Heart right ventricle (tissue), 16 donors: ENCODE measurements at regions of chr6 and their contacts with region 1.

Region 1: GRCh38 chr6:72084992-72085569 is 198.7 kb downstream of the RIMS1 start:
- DNase-seq: no peak
- ATAC-seq: no peak
- H3K4me3 ChIP-seq: no peak overlapping the region
- H3K27ac ChIP-seq: no peak overlapping the region
- H3K4me1 ChIP-seq: no peaks in the 10 kb centered on the region
- H3K27me3 ChIP-seq: peaks cover 0 to 7% (median 4%) of the 10 kb centered on the region in 7 donors
- CTCF ChIP-seq: peak in 8 of 9 donors; percentile 30 to 68 (median 56)

Region 2: GRCh38 chr6:71533939-71534379 is 551.1 kb before region 1 on chr6:
- intact Hi-C with region 1: loop called in 9 of 10 experiments (anchors 2 to 5 kb)
- DNase-seq: no peak
- ATAC-seq: no peak
- H3K4me3 ChIP-seq: no peak overlapping the region
- H3K27ac ChIP-seq: no peak overlapping the region
- H3K4me1 ChIP-seq: no peaks in the 10 kb centered on the region
- H3K27me3 ChIP-seq: no peaks in the 10 kb centered on the region
- CTCF ChIP-seq: peak; percentile 30 to 80 (median 69)

Region 3: DNA sequence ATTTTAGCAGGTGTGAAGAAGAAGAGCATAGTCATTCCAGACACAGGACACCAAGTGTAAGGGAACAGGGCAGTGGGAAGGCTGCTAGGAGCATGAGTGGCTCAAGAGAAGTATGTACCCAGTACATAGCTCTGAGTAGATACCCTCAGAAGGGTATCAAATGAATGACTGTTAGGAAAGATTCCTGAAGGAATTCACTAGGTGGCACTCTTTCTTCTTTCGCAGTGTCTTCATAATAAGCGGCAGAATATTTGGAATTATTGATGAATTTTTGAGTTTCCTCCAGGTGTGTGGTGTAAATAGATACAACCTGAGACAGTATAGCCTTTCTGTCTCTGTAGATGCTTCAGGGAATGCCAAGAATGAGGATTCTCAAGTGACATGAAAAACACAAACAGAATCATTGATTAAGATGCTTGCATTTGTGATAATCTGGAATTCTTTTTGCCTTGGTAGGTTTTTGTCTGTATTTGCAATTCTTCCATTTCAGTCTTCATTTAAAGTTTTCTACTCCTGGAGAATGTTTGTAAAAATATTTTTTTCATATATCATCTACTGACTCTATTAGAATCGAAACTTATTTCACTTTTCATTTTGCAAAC is 463.1 kb before region 1 on chr6:
- intact Hi-C with region 1: loop called in 3 of 10 experiments (anchors 5 to 10 kb)
- DNase-seq: no peak
- ATAC-seq: no peak
- H3K4me3 ChIP-seq: no peak overlapping the region
- H3K27ac ChIP-seq: no peak overlapping the region
- H3K4me1 ChIP-seq: no peaks in the 10 kb centered on the region
- H3K27me3 ChIP-seq: no peaks in the 10 kb centered on the region
- CTCF ChIP-seq: peak in 7 of 9 donors; percentile 15 to 56 (median 37)